Activated naive CD4-positive, alpha-beta T cell treated with anti-CD3 and anti-CD28 coated beads, Interleukin-2, amount 10 ng/mL, durations not matched to agents 7 days and 5 days (primary cell): ENCODE measurements at regions of chr16 and their contacts with region 1.

Region 1: DNA sequence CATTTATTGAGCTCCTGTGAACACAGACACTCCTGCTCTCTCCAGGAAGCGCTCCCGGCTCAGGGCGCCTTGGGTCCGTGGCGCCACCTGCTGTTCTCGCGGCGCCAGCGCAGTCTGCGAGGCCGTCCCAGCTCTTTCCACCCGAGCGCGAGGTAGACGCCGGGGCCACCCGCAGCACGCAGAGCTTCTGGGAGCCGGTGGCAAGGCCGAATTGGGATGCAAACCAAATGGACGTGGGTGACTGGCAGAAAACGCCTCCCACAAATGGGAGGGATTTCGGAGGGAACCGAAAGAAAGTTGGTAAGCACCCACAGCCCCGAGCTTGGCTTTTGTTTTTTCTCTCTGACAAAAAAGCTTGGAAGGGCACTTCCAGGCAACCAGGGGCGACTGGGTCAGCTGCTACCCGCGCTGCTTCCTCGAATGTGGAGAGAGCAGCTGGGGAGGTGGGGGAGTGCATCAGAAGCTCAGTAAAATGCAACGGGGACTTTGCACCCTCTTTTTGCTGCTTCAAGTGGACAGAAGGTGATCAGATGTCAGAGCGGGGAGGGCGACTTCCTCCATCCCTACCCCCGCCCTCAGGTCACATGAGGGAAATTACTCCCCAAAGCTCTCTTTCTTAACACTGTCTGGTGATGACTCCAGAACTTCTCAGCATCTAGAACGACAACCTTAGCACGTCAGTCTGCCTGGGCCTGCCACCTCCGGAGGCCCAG is 13.5 kb upstream of the N4BP1 start:
- DNase-seq: peak; percentile 85
- H3K4me3 Mint-ChIP-seq: peak overlapping the region; percentile 72
- H3K27ac Mint-ChIP-seq: peak overlapping the region; percentile 64
- H3K4me1 Mint-ChIP-seq: peaks cover 54% of the 10 kb centered on the region
- H3K27me3 Mint-ChIP-seq: peaks cover 16% of the 10 kb centered on the region

Region 2: GRCh38 chr16:48231727-48232492 is 391.6 kb before region 1 on chr16:
- CTCF ChIA-PET with region 1: interaction called, 36 read pairs
- DNase-seq: peak; percentile 64
- H3K4me3 Mint-ChIP-seq: no peak overlapping the region
- H3K27ac Mint-ChIP-seq: peak overlapping the region; percentile 16
- H3K4me1 Mint-ChIP-seq: peaks cover 21% of the 10 kb centered on the region
- H3K27me3 Mint-ChIP-seq: no peaks in the 10 kb centered on the region

Region 3: GRCh38 chr16:48511071-48511540 is 112.4 kb before region 1 on chr16:
- CTCF ChIA-PET with region 1: no interaction called
- DNase-seq: no peak
- H3K4me3 Mint-ChIP-seq: no peak overlapping the region
- H3K27ac Mint-ChIP-seq: peak overlapping the region; percentile 9
- H3K4me1 Mint-ChIP-seq: no peaks in the 10 kb centered on the region
- H3K27me3 Mint-ChIP-seq: peaks cover 8% of the 10 kb centered on the region

Region 4: GRCh38 chr16:48526058-48526957 is 97.2 kb before region 1 on chr16:
- CTCF ChIA-PET with region 1: interaction called, 14 read pairs
- DNase-seq: peak; percentile 57
- H3K4me3 Mint-ChIP-seq: no peak overlapping the region
- H3K27ac Mint-ChIP-seq: no peak overlapping the region
- H3K4me1 Mint-ChIP-seq: no peaks in the 10 kb centered on the region
- H3K27me3 Mint-ChIP-seq: peaks cover 11% of the 10 kb centered on the region

Region 5: DNA sequence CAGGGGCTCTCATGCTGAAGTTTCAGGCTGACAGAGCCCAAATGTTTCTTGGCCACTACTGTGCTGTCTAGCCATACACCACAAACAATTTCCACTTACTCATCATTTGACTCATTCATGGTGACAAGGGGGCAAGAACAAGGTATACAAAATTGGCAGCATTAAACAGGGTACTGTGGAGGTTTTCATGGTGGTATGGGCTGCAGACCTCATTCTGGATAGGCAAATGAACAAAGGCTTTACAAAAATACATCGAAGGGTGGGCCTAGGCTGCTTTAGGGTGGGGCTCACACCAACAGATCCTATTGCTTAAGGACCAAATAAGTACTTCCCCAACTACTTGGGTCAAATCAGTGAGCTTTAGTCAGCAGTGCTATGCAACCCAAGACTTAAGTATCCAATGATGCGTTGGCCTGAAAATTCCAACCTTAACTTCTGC is 66.5 kb before region 1 on chr16:
- CTCF ChIA-PET with region 1: interaction called, 16 read pairs
- DNase-seq: no peak
- H3K4me3 Mint-ChIP-seq: no peak overlapping the region
- H3K27ac Mint-ChIP-seq: peak overlapping the region; percentile 72
- H3K4me1 Mint-ChIP-seq: peaks cover 70% of the 10 kb centered on the region
- H3K27me3 Mint-ChIP-seq: no peaks in the 10 kb centered on the region

Region 6: GRCh38 chr16:48609652-48610029 is 13.8 kb before region 1 on chr16:
- CTCF ChIA-PET with region 1: interaction called, 28 read pairs
- DNase-seq: no peak
- H3K4me3 Mint-ChIP-seq: peak overlapping the region; percentile 87
- H3K27ac Mint-ChIP-seq: peak overlapping the region; percentile 96
- H3K4me1 Mint-ChIP-seq: peaks cover 41% of the 10 kb centered on the region
- H3K27me3 Mint-ChIP-seq: peaks cover 4% of the 10 kb centered on the region

Region 7: DNA sequence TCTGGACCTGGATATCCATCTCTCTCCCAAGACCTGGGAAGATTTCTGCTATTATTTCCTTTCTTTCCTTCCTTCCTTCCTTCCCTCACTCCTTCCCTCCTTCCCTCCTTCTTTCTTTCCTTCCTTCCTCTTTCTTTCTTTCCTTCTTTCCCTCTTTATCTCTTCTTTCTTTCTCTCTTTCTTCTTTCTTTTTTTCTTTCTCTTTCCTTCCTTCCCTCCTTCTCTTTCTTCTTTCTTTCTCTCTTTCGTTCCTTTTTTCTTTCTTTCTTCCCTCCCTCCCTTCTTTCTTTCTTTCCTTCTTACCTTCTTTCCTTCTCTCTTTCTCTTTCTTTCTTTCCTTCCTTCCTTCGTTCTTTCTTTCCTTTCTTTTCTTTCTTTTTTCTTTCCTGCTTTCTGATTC is 24.3 kb after region 1 on chr16:
- CTCF ChIA-PET with region 1: no interaction called
- DNase-seq: no peak
- H3K4me3 Mint-ChIP-seq: no peak overlapping the region
- H3K27ac Mint-ChIP-seq: no peak overlapping the region
- H3K4me1 Mint-ChIP-seq: no peaks in the 10 kb centered on the region
- H3K27me3 Mint-ChIP-seq: peaks cover 7% of the 10 kb centered on the region